Aorta (tissue), 5 donors: ENCODE measurements at regions of chr17 and their contacts with region 1.

Region 1: DNA sequence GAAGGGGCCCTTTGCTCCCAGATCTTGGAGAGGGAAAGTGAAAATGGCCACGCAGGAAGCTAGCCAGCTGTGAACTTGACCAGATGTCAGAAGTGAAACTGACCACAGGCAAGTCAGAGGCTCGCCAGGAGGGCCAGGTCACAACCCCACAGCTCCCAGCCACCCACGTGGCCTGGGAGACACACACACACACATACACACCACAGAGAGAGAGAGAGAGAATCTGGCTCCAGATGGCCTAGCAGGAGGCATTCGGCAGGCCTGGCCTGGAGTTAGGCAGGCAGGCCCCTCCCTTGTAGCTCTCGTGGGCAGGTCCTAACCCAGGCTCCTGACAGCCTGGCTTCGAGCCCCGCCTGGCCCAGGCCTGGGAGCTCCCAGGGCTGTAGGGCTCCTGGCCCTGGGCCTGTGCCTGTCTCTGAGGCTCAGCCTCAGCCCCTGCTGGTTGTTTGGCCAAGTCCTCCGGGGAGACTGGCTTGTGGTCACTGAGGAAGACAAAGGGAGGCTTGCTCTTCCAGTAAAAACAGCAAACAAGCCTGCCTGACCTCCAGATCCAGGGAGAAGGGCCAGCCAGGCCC is 20.2 kb downstream of the NGFR start:
- DNase-seq: peak; percentile 93 to 95
- ATAC-seq: peak; percentile 95
- H3K4me3 ChIP-seq: no peak overlapping the region
- H3K27ac ChIP-seq: peak overlapping the region; percentile 12 to 16
- H3K4me1 ChIP-seq: no peaks in the 10 kb centered on the region
- H3K27me3 ChIP-seq: no peaks in the 10 kb centered on the region

Region 2: DNA sequence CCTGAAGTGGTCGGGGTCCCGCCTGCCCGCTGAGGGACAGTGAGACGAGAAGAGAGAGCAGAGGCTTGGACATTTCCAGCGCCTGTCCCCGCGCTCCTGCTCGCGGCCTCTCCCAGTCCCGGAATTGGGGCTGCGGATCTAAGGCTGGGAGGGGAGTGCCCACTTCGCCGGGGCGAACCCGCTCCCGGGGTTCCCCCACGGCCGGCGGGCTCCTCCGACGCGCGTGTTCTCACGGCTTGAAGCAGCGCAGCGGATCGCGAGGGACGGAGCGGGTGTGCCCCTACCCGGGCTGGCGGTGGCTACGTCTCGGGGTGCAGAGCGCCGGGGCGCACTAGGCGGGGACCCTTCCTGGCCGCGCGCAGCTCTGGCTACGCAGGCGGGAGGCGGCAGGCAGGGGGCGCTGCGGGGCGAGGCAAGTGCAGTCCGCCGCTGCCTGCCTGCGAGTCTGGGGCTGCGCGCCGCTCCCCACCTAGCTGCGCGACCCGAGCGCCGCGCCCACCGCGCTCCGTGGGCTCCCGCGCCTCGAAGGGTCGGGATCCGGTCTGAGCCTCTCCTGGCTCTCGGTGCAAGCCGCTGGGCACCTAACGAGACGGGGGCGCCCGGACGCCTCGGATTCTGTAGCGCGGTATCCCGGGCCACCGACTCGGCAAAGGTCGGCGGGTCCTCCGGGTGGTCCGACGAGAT is 19.0 kb before region 1 on chr17:
- intact Hi-C with region 1: loop called in 1 of 2 experiments (anchors 2 kb)
- DNase-seq: peak; percentile 83 to 94
- ATAC-seq: peak; percentile 87
- H3K4me3 ChIP-seq: no peak overlapping the region
- H3K27ac ChIP-seq: no peak overlapping the region
- H3K4me1 ChIP-seq: no peaks in the 10 kb centered on the region
- H3K27me3 ChIP-seq: no peaks in the 10 kb centered on the region

Region 3: GRCh38 chr17:49659661-49660382 is 144.5 kb after region 1 on chr17:
- intact Hi-C with region 1: no loop called
- DNase-seq: no peak
- ATAC-seq: no peak
- H3K4me3 ChIP-seq: no peak overlapping the region
- H3K27ac ChIP-seq: no peak overlapping the region
- H3K4me1 ChIP-seq: peaks cover 5 to 11% of the 10 kb centered on the region in 2 donors
- H3K27me3 ChIP-seq: no peaks in the 10 kb centered on the region